Common myeloid progenitor, CD34-positive (primary cell): ENCODE measurements at regions of chr6 and their contacts with region 1.

Region 1: DNA sequence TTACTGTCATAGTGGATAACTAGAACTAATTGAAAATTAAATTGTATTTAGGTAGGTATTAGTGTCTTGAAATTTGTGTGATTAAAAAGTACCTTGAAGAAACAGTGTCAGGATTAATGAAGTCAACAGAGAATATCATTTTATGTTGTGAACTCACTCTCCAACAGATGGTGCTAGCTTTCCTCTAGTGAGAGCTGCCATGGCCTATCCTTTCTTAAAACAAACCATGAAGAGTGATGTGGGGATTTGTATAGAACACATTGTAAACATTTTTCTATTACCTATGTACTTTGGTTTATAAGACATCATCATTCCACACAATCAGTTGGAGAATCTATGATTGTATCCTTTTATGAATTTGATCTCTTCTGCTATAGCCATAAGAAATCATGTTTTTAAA is 4.8 kb upstream of the SRSF12 start:
- DNase-seq: peak in 2 of 3 donors; percentile 66 to 71
- H3K4me3 ChIP-seq: no peak overlapping the region
- H3K27ac ChIP-seq: no peak overlapping the region
- H3K4me1 ChIP-seq: peaks cover 0 to 5% (median 4%) of the 10 kb centered on the region in 4 experiments
- H3K27me3 ChIP-seq: no peaks in the 10 kb centered on the region

Region 2: GRCh38 chr6:88823998-88824397 is 298.6 kb before region 1 on chr6:
- CTCF ChIA-PET with region 1: no interaction called
- POLR2A ChIA-PET with region 1: no interaction called
- DNase-seq: no peak
- H3K4me3 ChIP-seq: no peak overlapping the region
- H3K27ac ChIP-seq: no peak overlapping the region
- H3K4me1 ChIP-seq: peaks cover 0 to 6% (median 0%) of the 10 kb centered on the region in 4 experiments
- H3K27me3 ChIP-seq: no peaks in the 10 kb centered on the region

Region 3: DNA sequence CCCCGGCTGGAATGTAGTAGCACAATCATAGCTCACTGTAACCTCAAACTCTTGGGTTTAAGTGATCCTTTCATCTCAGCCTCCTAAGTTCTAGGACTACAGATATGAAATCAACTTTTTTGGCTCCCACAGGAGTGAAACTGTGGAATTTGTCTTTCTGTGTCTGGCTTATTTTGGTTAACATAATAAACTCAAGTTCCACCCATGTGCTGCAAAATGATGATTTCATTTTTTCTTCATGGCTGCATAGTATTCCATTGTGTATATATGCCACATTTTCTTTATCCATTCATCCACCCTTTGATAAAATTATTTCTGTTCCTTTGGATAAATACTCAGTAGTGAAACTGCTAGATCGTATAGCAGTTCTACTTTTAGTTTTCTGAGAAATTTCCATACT is 189.1 kb before region 1 on chr6:
- CTCF ChIA-PET with region 1: no interaction called
- POLR2A ChIA-PET with region 1: no interaction called
- DNase-seq: no peak
- H3K4me3 ChIP-seq: no peak overlapping the region
- H3K27ac ChIP-seq: no peak overlapping the region
- H3K4me1 ChIP-seq: no peaks in the 10 kb centered on the region
- H3K27me3 ChIP-seq: no peaks in the 10 kb centered on the region

Region 4: DNA sequence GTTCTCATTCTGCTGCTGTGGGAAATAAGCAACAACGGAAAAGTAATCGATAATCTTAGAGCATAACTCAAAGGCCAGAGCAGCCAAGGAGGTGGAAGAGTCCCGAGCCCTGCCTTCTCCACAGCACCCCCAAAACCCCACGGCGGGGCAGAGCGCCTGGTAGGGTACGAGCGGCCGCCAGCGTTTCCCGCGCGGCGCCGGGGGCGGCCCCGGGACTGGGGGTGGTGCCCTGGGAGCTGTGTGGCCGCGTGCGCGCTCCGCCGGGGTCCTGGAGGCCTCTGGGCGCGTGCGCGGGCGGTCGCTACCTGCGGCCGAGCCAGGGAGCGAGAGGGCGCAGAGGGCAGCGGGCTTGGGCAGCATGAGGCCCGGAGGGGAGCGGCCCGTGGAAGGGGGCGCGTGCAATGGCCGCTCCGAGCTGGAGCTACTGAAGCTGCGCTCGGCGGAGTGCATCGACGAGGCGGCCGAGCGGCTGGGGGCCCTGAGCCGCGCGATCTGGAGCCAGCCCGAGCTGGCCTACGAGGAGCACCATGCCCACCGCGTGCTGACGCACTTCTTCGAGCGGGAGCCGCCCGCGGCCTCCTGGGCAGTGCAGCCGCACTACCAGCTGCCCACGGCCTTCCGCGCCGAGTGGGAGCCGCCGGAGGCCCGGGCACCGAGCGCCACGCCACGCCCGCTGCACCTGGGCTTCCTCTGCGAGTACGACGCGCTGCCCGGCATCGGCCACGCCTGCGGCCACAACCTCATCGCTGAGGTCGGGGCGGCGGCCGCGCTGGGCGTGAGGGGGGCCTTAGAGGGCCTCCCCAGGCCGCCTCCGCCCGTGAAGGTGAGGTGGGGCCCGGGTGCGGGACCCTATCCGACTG is 23.4 kb after region 1 on chr6 and contains the start of gene PM20D2:
- CTCF ChIA-PET with region 1: interaction called, 36 read pairs
- POLR2A ChIA-PET with region 1: interaction called, 3 read pairs
- DNase-seq: peak; percentile 56 to 85 (median 77)
- H3K4me3 ChIP-seq: peak within 1 kb of the TSS; percentile 68 to 96 (median 82)
- H3K27ac ChIP-seq: peak within 1 kb of the TSS; percentile 17 to 72
- H3K4me1 ChIP-seq: peaks cover 2 to 38% (median 25%) of the 10 kb centered on the region in 4 experiments
- H3K27me3 ChIP-seq: no peaks in the 10 kb centered on the region

Region 5: DNA sequence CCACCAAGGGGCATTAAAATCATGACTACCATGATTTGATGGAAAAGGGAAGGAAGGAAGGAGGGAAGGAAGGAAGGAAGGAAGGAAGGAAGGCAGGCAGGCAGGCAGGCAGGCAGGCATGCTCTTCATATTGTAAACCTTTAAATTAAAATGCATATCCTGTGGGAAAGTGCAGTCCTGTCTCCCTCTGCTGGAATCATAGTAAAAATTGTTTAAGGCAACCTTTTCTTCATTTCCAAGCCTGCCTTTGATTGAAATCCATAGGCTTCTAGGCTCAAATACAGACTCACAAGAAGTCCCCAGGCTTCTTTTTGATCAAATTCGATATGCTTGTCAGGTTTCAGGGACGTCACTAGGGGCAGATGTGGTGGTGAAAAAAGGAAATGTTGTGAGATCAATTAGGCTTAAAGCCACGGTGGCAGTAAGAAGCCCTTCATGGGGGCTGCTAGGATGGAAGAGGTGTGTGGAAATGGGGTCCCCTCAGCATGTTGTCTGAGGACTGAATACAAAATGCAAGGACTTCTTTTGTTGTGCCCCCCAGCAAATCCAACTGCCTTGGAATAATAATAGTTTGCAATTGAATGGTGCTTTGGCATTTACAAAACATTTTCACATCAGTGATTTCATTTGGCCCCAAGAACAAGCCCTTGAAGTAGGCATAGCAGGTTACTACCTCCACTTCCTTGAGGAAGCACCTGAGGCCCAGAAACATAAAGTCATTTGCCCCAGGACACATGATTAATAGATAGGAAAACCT is 120.1 kb after region 1 on chr6:
- CTCF ChIA-PET with region 1: interaction called, 13 read pairs
- POLR2A ChIA-PET with region 1: no interaction called
- DNase-seq: peak; percentile 65 to 80 (median 77)
- H3K4me3 ChIP-seq: no peak overlapping the region
- H3K27ac ChIP-seq: no peak overlapping the region
- H3K4me1 ChIP-seq: peaks cover 12 to 36% (median 24%) of the 10 kb centered on the region in 4 experiments
- H3K27me3 ChIP-seq: no peaks in the 10 kb centered on the region

Region 6: DNA sequence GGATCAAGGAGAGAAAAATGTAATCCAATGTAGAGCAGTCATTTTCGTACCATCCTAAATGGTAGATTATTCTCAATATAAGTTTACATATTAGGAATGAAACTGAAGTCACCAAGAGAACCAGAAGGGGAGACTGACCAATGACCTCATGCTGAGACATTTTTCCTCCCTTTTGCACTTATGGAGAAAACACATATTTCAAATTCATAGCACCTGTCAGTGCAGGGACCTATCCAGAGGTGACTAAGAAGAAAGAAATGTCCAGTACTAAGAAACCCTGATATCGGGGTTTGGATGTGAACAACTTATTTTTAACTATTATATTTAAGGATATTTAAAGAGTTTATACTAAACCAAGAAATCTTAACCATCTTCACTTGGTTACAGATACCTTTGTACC is 532.5 kb after region 1 on chr6:
- CTCF ChIA-PET with region 1: no interaction called
- POLR2A ChIA-PET with region 1: no interaction called
- DNase-seq: no peak
- H3K4me3 ChIP-seq: no peak overlapping the region
- H3K27ac ChIP-seq: no peak overlapping the region
- H3K4me1 ChIP-seq: no peaks in the 10 kb centered on the region
- H3K27me3 ChIP-seq: no peaks in the 10 kb centered on the region